Aorta (tissue), 5 donors: ENCODE measurements at regions of chr6 and their contacts with region 1.

Region 1: DNA sequence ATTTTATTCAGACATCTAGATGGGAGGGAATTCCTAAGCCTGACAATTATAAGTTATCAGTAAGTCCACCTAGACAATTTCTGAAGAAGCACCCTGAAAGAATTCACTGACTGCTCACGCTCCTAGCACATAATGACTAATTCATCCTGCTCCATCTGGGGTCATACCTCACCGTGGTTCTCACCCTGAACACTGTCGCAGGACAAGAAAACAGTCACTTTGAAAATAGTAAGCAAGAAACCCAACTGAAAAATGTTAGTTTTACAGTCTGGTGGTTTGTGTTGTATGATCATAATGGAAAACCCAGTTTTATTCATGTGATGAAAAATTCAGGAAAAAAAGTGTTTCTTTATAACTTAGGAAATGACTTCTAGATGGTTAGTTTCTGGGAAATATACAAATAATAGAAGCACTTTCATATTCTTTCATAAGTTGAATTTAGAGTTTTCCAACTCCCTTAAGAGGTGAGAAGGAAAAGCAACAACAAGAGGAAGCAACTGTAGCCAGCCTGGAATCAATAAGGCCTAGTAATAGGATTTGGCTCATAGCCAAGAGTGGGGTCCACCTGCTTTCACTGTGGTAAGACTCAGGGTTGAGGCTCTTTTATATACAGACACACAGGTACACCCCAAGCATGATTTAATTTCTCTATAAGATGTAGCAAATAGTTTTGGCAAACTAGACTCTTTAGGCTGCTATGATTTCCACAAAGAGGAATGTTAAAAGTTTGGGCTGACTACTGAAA is 94.1 kb downstream of the HIVEP2 start:
- DNase-seq: no peak
- ATAC-seq: no peak
- H3K4me3 ChIP-seq: no peak overlapping the region
- H3K27ac ChIP-seq: no peak overlapping the region
- H3K4me1 ChIP-seq: peaks cover 0 to 4% of the 10 kb centered on the region in 2 donors
- H3K27me3 ChIP-seq: no peaks in the 10 kb centered on the region

Region 2: GRCh38 chr6:142885182-142885867 is 34.5 kb after region 1 on chr6:
- intact Hi-C with region 1: loop called in 1 of 2 experiments (anchors 5 kb)
- DNase-seq: no peak
- ATAC-seq: peak; percentile 83
- H3K4me3 ChIP-seq: peak overlapping the region; percentile 27 to 32
- H3K27ac ChIP-seq: peak overlapping the region; percentile 7 to 32
- H3K4me1 ChIP-seq: peaks cover 0 to 5% of the 10 kb centered on the region in 2 donors
- H3K27me3 ChIP-seq: no peaks in the 10 kb centered on the region

Region 3: GRCh38 chr6:142902636-142903053 is 51.8 kb after region 1 on chr6:
- intact Hi-C with region 1: no loop called
- DNase-seq: peak; percentile 78 to 85
- ATAC-seq: peak; percentile 33
- H3K4me3 ChIP-seq: no peak overlapping the region
- H3K27ac ChIP-seq: no peak overlapping the region
- H3K4me1 ChIP-seq: peaks cover 0 to 2% of the 10 kb centered on the region in 2 donors
- H3K27me3 ChIP-seq: no peaks in the 10 kb centered on the region